Ascending aorta (tissue), 2 donors: ENCODE measurements at regions of chr9 and their contacts with region 1.

Region 1: DNA sequence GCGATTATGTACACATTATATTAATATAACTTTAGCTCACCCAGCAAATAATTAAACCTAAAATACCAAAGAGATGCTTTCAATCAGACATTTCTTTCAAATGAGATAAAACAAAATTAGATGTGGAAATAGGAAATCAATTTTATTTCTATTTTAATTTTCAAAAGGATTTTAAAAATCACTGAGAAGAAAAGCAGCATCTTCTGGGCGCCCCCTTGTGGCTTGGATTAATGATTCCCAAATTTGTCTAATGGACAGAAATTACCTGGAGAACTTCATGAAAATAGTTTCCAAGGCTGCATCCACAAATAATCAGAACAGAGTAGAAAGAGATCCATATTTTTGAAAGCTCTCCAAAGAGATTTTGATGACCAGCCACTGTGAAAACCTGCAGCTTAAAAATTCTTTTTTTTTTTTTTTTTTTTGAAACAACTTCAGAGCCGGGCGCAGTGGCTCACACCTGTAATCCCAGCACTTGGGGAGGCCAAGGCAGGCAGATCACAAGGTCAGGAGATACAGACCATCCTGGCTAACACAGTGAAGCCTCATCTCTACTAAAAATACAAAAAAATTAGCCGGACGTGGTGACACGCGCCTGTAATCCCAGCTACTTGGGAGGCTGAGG is 50.9 kb upstream of the CEMIP2 start:
- DNase-seq: no peak
- H3K4me3 ChIP-seq: no peak overlapping the region
- H3K27ac ChIP-seq: no peak overlapping the region
- H3K4me1 ChIP-seq: peaks cover 3 to 16% of the 10 kb centered on the region in 2 donors
- H3K27me3 ChIP-seq: no peaks in the 10 kb centered on the region
- CTCF ChIP-seq: peak; percentile 33 to 81 (median 76)

Region 2: DNA sequence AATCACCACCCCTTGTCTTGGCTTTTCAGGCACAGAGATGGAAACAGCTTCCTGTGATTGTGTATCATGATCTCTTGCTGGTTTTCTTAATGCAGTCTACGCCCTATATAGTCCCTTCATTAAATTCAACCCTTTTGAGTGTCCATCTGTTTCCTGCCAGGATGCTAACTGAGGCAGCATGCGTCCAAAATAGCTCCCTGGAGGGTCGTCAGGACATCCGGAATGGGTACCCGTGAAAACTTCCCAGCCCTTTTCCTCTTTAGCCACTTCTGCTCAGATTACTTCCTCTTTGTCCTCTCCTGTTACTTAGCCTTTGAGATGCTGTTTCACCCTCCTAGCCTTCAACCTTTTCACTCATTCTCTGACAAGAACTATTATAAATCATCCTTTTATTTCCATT is 1325.0 kb before region 1 on chr9:
- intact Hi-C with region 1: loop called (anchors 5 kb)
- DNase-seq: peak in 1 of 2 donors; percentile 45
- H3K4me3 ChIP-seq: no peak overlapping the region
- H3K27ac ChIP-seq: peak overlapping the region in 1 of 2 donors; percentile 40
- H3K4me1 ChIP-seq: peaks cover 7 to 23% of the 10 kb centered on the region in 2 donors
- H3K27me3 ChIP-seq: no peaks in the 10 kb centered on the region
- CTCF ChIP-seq: no peak

Region 3: GRCh38 chr9:71604197-71605063 is 214.8 kb before region 1 on chr9:
- intact Hi-C with region 1: loop called (anchors 5 kb)
- DNase-seq: peak in 1 of 2 donors; percentile 71
- H3K4me3 ChIP-seq: no peak overlapping the region
- H3K27ac ChIP-seq: no peak overlapping the region
- H3K4me1 ChIP-seq: peaks cover 0 to 10% of the 10 kb centered on the region in 2 donors
- H3K27me3 ChIP-seq: no peaks in the 10 kb centered on the region
- CTCF ChIP-seq: peak; percentile 38 to 48 (median 47)

Region 4: DNA sequence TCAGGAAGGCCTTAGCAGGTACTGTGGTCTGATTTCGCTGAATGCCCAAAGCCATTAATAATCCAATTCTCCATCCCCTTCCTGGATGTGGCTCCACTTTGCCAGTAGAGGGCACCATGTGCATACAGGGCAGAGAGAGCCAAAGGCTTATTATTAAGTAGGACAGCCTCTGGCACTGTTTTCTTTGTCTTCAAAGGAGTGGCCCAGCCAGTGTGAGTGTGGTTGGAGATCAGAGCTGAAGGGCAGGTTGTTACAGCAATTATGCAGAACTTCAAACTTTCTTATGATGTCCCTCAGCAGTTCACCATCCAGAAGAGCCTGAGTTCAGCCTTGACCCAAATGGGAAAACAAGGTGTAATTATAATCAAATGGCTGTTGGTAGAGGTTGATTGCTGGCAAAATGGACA is 12.3 kb before region 1 on chr9:
- intact Hi-C with region 1: loop called (anchors 1 kb)
- DNase-seq: peak; percentile 21 to 79
- H3K4me3 ChIP-seq: no peak overlapping the region
- H3K27ac ChIP-seq: no peak overlapping the region
- H3K4me1 ChIP-seq: peaks cover 0 to 3% of the 10 kb centered on the region in 2 donors
- H3K27me3 ChIP-seq: no peaks in the 10 kb centered on the region
- CTCF ChIP-seq: peak; percentile 80 to 97 (median 82)